SK-N-SH (cell line): ENCODE measurements at regions of chr5 and their contacts with region 1.

Region 1: DNA sequence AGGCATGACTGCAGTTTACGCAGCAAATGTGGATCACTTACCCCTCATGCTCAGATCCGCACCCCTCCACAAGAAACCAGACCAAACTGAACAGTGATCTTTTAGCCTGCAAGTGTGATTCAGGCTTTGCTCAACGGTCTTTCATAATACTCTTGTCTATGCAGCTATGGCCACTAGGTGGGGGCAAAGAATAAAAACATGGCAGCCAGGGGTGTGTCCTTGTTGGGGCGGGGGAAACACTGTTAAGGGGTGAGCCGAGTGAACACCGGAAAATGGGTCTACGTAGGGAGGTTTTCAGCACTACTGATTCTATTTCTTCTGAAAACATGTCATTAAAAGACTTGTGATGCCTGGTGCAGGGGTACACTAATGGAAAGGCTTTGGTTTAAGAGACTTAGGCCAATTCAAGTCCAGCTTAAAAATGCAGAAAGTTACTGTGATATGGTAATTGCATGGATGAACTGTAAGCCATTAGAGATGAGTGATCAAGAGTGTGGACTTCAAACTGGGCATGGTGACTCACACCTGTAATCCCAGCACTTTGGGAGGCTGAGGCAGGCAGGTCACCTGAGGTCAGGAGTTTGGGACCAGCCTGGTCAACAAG is 49.9 kb upstream of the GPR151 start:
- DNase-seq: peak; percentile 75
- H3K4me3 ChIP-seq: peak overlapping the region in 1 of 2 experiments; percentile 23; a peak in 1 of 4 replicates
- H3K27ac ChIP-seq: no peak overlapping the region
- H3K4me1 ChIP-seq: peaks cover 2 to 18% of the 10 kb centered on the region in 2 experiments; a peak in 3 of 4 replicates
- H3K27me3 ChIP-seq: no peaks in the 10 kb centered on the region
- CTCF ChIP-seq: peak; percentile 77
- EP300 ChIP-seq: no peak
- RAD21 ChIP-seq: peak; percentile 92

Region 2: GRCh38 chr5:146647656-146648199 is 81.9 kb after region 1 on chr5:
- CTCF ChIA-PET with region 1: interaction called, 14 read pairs
- POLR2A ChIA-PET with region 1: interaction called, 3 read pairs
- DNase-seq: peak; percentile 61
- H3K4me3 ChIP-seq: no peak overlapping the region
- H3K27ac ChIP-seq: peak overlapping the region; percentile 18 to 97; a peak in 3 of 4 replicates
- H3K4me1 ChIP-seq: peaks cover 0 to 26% of the 10 kb centered on the region in 2 experiments; a peak in 2 of 4 replicates
- H3K27me3 ChIP-seq: no peaks in the 10 kb centered on the region
- CTCF ChIP-seq: no peak
- EP300 ChIP-seq: peak; percentile 69 to 89; a peak in 3 of 4 replicates
- RAD21 ChIP-seq: no peak